ENCODE measurements at regions of chr6 and their contacts with region 1.

Region 1: DNA sequence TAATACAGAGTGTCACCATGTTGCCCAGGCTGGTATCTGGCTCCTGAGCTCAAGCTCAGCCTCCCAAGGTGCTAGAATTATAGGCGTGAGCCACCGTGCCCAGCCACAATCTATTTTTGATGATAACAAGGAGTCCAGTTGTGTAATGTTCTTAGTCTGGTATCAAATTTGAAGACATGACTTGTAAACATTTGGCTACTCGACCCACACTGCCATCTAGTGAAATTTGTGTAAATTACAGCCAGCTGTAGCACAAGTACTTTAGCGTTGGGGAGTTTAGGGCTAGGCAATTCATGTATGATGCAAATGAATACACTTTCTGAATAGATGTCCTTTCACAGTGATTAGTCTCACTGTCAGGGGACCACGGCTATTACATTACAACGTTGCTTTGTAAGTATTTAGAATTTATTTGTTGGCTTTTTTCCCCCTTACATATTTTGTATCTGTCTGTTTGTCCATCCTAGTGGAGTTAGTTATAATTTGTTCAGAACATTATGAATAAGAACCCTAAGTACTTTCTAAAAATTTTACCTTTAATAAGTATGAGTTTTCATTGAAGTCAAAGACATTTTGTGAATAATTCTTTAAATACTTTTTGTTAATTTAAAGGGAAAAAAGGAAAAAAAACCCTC is 139.7 kb downstream of the PRDM13 start:
- DNase-seq: peak; percentile 70
- ATAC-seq: peak; percentile 74
- H3K4me3 Mint-ChIP-seq: no peak overlapping the region
- H3K27ac Mint-ChIP-seq: no peak overlapping the region
- H3K4me1 Mint-ChIP-seq: no peaks in the 10 kb centered on the region
- H3K27me3 Mint-ChIP-seq: peaks cover 29% of the 10 kb centered on the region

Region 2: GRCh38 chr6:99467509-99468106 is 278.8 kb before region 1 on chr6:
- CTCF ChIA-PET with region 1: interaction called, 11 read pairs
- POLR2A ChIA-PET with region 1: no interaction called
- DNase-seq: no peak
- ATAC-seq: no peak
- H3K4me3 Mint-ChIP-seq: no peak overlapping the region
- H3K27ac Mint-ChIP-seq: no peak overlapping the region
- H3K4me1 Mint-ChIP-seq: no peaks in the 10 kb centered on the region
- H3K27me3 Mint-ChIP-seq: no peaks in the 10 kb centered on the region

Region 3: GRCh38 chr6:99575544-99576227 is 170.7 kb before region 1 on chr6:
- CTCF ChIA-PET with region 1: no interaction called
- POLR2A ChIA-PET with region 1: no interaction called
- DNase-seq: no peak
- ATAC-seq: peak; percentile 44
- H3K4me3 Mint-ChIP-seq: no peak overlapping the region
- H3K27ac Mint-ChIP-seq: no peak overlapping the region
- H3K4me1 Mint-ChIP-seq: peaks cover 17% of the 10 kb centered on the region
- H3K27me3 Mint-ChIP-seq: peaks cover 19% of the 10 kb centered on the region

Measured in activated CD8-positive, alpha-beta T cell treated with anti-CD3 and anti-CD28 coated beads, Interleukin-2, amount 10 ng/mL, durations not matched to agents 7 days and 5 days (primary cell).